Activated CD4-positive, alpha-beta T cell treated with anti-CD3 and anti-CD28 coated beads, Interleukin-2, amount 10 ng/mL, durations not matched to agents 24 days and 14 days (primary cell): ENCODE measurements at regions of chr5 and their contacts with region 1.

Region 1: DNA sequence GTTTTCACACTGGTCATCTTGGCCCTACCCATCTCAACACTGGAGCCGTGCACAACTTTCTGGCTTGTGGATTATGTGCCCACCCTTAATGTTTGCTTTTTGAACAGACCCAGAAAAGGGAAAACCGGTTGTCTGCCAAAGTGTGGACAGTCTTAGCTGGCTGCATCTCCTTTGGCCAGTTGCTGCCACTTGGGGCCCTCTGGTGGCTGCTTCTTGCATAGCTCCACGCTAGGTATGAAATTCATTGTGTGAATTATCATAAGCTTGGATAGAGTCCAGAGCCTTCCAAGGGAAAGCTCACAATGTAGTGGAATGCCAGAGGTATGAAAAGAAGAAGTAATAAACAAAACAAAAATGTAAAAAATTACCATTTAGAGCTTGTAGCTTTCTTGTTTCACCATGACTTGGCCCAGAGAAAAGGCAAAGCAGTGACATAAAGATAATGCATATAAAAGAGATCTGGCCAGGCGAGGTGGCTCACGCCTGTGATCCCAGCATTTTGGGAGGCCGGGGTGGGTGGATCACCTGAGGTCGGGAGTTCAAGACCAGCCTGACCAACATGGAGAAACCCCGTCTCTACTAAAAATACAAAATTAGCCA is 12.5 kb upstream of the SLC36A3 start:
- DNase-seq: peak; percentile 84
- H3K4me3 Mint-ChIP-seq: no peak overlapping the region
- H3K27ac Mint-ChIP-seq: no peak overlapping the region
- H3K4me1 Mint-ChIP-seq: no peaks in the 10 kb centered on the region
- H3K27me3 Mint-ChIP-seq: peaks cover 12% of the 10 kb centered on the region

Region 2: DNA sequence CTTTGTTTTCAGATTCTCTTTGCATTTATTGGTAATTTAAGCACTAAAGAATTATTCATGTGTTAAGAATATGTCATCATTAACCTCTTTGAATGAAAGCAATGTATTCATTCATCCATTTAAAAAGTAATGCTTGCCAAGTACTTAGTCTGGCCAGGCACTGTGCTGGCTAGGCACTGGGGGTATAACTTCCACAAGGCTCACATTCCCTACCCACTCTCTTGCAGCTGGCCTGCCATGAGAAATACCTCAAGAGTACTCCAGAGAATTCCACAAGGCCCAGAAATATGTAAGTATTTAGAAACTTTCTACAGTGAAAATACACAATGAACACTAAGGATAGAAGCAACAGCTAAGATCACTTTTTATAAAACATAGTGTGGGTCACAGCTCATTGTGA is 436.7 kb before region 1 on chr5:
- intact Hi-C with region 1: no loop called
- DNase-seq: no peak
- H3K4me3 Mint-ChIP-seq: no peak overlapping the region
- H3K27ac Mint-ChIP-seq: no peak overlapping the region
- H3K4me1 Mint-ChIP-seq: no peaks in the 10 kb centered on the region
- H3K27me3 Mint-ChIP-seq: no peaks in the 10 kb centered on the region

Region 3: GRCh38 chr5:151285683-151286082 is 30.4 kb before region 1 on chr5:
- intact Hi-C with region 1: loop called (anchors 1 kb)
- DNase-seq: no peak
- H3K4me3 Mint-ChIP-seq: no peak overlapping the region
- H3K27ac Mint-ChIP-seq: no peak overlapping the region
- H3K4me1 Mint-ChIP-seq: peaks cover 2% of the 10 kb centered on the region
- H3K27me3 Mint-ChIP-seq: peaks cover 7% of the 10 kb centered on the region

Region 4: GRCh38 chr5:151347364-151347763 is 31.3 kb after region 1 on chr5 and contains the start of gene SLC36A2:
- intact Hi-C with region 1: no loop called
- DNase-seq: no peak
- H3K4me3 Mint-ChIP-seq: no peak within 1 kb of the TSS
- H3K27ac Mint-ChIP-seq: no peak within 1 kb of the TSS
- H3K4me1 Mint-ChIP-seq: no peaks in the 10 kb centered on the region
- H3K27me3 Mint-ChIP-seq: peaks cover 15% of the 10 kb centered on the region
- total RNA-seq, gene SLC36A2: not detected in 2 replicates